OCI-LY7 (cell line): ENCODE measurements at regions of chr11 and their contacts with region 1.

Region 1: GRCh38 chr11:3057069-3057963 is at the start of gene CARS1:
- DNase-seq: peak; percentile 94
- H3K4me3 ChIP-seq: peak within 1 kb of the TSS; percentile 95
- H3K27ac ChIP-seq: peak within 1 kb of the TSS; percentile 49
- H3K4me1 ChIP-seq: peaks cover 14% of the 10 kb centered on the region
- CTCF ChIP-seq: no peak
- total RNA-seq, gene CARS1: 58.3 and 62.4 TPM in 2 replicates

Region 2: DNA sequence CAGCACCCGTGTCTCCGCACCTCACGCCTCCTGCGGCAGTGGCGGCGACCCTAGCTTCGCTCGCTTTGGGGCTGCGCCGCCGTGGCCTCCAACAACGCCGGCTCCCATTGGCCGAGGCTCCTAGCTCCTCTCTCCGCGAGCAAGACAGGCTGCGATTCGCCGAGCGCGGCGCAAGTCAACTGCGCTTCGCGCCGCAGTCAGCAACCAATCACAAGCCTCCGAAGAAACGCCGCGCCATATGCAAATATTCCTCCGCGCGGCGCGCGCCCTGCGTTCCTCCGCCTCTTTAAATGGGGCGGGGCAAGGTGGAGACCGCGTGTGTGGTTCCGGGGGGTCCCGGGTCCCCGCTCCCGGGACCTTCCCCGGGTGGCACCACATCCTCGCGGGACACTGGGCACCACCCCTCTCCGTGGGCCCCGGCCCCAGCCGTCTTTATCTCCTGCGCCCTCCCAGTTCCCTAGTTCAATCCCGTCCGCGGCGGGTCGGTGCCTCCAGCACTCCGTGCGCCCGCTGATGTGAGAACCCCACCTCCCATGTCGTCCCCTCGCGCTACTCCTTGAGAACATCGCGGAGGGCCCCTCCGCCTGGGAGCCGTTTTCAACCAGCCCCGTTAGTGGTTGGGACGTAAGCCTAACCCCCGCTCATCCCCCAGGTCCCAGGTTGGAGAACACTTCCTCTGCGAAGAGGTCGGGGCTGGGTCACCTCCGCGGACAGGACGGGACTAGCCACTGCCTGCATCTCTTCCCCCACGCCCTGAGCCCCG is 64.9 kb before region 1 on chr11 and contains the start of gene NAP1L4:
- CTCF ChIA-PET with region 1: no interaction called
- POLR2A ChIA-PET with region 1: interaction called, 3 read pairs
- intact Hi-C with region 1: loop called (anchors 2 kb)
- DNase-seq: peak; percentile 98
- H3K4me3 ChIP-seq: peak within 1 kb of the TSS; percentile 97
- H3K27ac ChIP-seq: peak within 1 kb of the TSS; percentile 69
- H3K4me1 ChIP-seq: peaks cover 18% of the 10 kb centered on the region
- CTCF ChIP-seq: no peak
- total RNA-seq, gene NAP1L4: 152 and 247 TPM in 2 replicates